Sigmoid colon (tissue), 7 donors: ENCODE measurements at regions of chr14 and their contacts with region 1.

Region 1: DNA sequence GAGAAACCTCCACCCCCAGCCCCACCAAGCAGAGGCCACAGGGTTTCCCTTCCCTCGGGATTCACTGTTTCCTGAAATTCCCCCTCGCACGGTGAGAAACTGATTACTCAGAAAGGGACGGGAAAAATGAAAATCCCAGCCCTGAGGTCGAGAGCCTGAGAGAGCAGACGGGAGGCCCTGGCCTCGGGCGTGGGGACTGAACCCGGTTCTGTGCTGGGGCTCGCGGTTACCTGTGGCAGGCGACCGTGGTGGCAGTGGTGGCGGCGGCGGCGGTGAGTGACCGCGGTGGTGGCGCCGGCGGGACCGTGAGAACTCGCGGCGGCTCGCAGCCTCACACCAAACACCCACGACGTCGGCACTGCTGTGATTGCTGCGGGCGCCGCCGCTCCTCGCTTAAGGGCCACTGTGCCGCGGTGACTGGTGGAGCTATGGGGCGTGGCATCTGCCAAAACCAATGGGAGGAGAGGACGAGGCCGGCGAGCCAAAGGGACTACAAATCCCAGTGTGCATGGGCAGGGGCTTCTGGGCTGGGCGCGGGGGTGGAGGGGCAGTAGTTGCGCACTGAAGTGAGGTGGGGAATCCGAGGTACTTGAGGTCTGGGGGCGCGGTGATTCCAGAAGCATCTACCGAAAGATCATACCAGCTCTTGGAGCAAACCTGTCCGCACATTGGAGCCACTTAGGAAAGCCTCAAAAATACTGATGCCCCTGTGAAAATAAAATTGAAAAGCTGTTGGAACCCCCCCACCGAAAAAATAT is at the start of gene LGMN:
- DNase-seq: peak; percentile 99
- H3K4me3 ChIP-seq: peak within 1 kb of the TSS; percentile 73 to 88 (median 76)
- H3K27ac ChIP-seq: peak within 1 kb of the TSS; percentile 87 to 90 (median 88)
- H3K4me1 ChIP-seq: peaks cover 0 to 22% (median 12%) of the 10 kb centered on the region in 4 donors
- H3K27me3 ChIP-seq: no peaks in the 10 kb centered on the region
- CTCF ChIP-seq: no peak
- EP300 ChIP-seq: no peak
- POLR2A ChIP-seq: peak; percentile 95 to 96
- total RNA-seq, gene LGMN: 53.2 to 96.0 (median 79.0) TPM

Region 2: GRCh38 chr14:92651106-92651757 is 97.2 kb before region 1 on chr14:
- intact Hi-C with region 1: no loop called
- DNase-seq: no peak
- H3K4me3 ChIP-seq: peak overlapping the region in 1 of 4 donors; percentile 42
- H3K27ac ChIP-seq: peak overlapping the region; percentile 81 to 99 (median 97)
- H3K4me1 ChIP-seq: peaks cover 0 to 78% (median 67%) of the 10 kb centered on the region in 4 donors
- H3K27me3 ChIP-seq: no peaks in the 10 kb centered on the region
- CTCF ChIP-seq: no peak
- EP300 ChIP-seq: no peak
- POLR2A ChIP-seq: no peak

Region 3: GRCh38 chr14:92663049-92663448 is 85.4 kb before region 1 on chr14:
- intact Hi-C with region 1: no loop called
- DNase-seq: no peak
- H3K4me3 ChIP-seq: no peak overlapping the region
- H3K27ac ChIP-seq: no peak overlapping the region
- H3K4me1 ChIP-seq: peaks cover 0 to 22% (median 17%) of the 10 kb centered on the region in 4 donors
- H3K27me3 ChIP-seq: no peaks in the 10 kb centered on the region
- CTCF ChIP-seq: no peak
- EP300 ChIP-seq: no peak
- POLR2A ChIP-seq: no peak

Region 4: DNA sequence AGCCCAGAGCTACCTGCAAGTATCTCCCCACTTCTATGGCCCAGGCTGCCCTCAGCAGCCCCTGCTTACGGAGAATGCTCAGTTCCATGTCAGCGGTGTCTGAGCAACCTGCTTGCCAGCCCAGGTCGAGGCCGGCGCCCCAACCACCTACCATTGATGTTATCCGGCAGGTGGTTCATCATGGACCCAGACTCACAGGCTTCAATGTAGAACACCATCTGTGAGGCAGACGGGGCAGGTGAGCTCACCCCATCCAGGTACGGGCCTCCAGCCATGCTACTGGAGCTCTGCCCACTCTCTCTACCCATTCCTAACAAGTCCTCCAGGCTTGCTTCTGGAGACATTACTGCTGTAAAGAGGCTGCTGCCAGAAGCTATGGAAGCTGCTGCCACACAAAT is 35.8 kb before region 1 on chr14:
- intact Hi-C with region 1: loop called (anchors 5 kb)
- DNase-seq: no peak
- H3K4me3 ChIP-seq: no peak overlapping the region
- H3K27ac ChIP-seq: no peak overlapping the region
- H3K4me1 ChIP-seq: peaks cover 0 to 12% (median 6%) of the 10 kb centered on the region in 4 donors
- H3K27me3 ChIP-seq: no peaks in the 10 kb centered on the region
- CTCF ChIP-seq: no peak
- EP300 ChIP-seq: no peak
- POLR2A ChIP-seq: no peak

Region 5: GRCh38 chr14:92793709-92794546 is 45.5 kb after region 1 on chr14 and contains the start of gene GOLGA5:
- intact Hi-C with region 1: loop called (anchors 2 kb)
- DNase-seq: peak; percentile 99
- H3K4me3 ChIP-seq: peak within 1 kb of the TSS; percentile 70 to 98 (median 95)
- H3K27ac ChIP-seq: peak within 1 kb of the TSS; percentile 86 to 92 (median 89)
- H3K4me1 ChIP-seq: peaks cover 0 to 22% (median 17%) of the 10 kb centered on the region in 4 donors
- H3K27me3 ChIP-seq: no peaks in the 10 kb centered on the region
- CTCF ChIP-seq: no peak
- EP300 ChIP-seq: peak in 1 of 4 donors; percentile 62
- POLR2A ChIP-seq: peak; percentile 35 to 56
- total RNA-seq, gene GOLGA5: 31.8 to 41.0 (median 34.7) TPM